CD4-positive, alpha-beta T cell (primary cell): ENCODE measurements at regions of chr3 and their contacts with region 1.

Region 1: DNA sequence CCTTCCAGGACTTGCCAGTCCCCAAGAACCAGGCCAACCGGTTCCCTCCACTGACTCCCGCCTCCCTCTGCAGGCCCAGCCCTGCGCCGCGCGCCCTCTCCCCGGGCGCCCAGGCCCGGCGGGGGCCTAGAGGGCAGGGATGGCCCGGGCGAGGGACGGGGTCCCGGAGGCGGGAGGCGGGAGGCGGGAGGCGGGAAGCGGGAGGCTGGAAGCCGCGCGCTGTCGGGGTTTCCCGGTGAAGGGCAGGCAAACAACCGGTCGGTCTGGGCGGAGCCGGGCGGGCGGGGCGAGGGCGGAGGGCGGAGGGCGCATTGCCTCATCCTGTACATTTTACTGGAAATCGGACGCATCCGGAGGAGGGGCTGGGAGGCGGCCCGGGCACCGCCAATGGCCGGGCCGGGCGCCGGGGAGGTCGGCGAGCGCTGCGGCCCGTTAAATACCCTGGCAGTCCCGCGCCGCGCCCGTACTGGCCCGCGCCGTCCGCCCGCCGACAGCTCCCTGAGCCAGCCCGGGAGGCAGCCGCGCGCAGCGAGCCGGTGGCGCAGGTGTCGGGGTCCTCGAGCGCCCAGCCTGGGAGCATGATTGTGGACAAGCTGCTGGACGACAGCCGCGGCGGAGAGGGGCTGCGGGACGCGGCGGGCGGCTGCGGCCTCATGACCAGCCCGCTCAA is at the start of gene NFKBIZ:
- DNase-seq: peak; percentile 84 to 97 (median 91)
- ATAC-seq: peak; percentile 66
- H3K4me3 ChIP-seq: peak within 1 kb of the TSS; percentile 79
- H3K4me3 Mint-ChIP-seq: peak within 1 kb of the TSS; percentile 99
- H3K27ac ChIP-seq: peak within 1 kb of the TSS; percentile 92 to 99
- H3K27ac Mint-ChIP-seq: peak within 1 kb of the TSS; percentile 100
- H3K4me1 ChIP-seq: peaks cover 24% of the 10 kb centered on the region
- H3K4me1 Mint-ChIP-seq: peaks cover 52% of the 10 kb centered on the region
- H3K27me3 ChIP-seq: no peaks in the 10 kb centered on the region
- H3K27me3 Mint-ChIP-seq: peaks cover 5% of the 10 kb centered on the region
- CTCF ChIP-seq: no peak
- total RNA-seq, gene NFKBIZ: 438 to 451 TPM

Region 2: DNA sequence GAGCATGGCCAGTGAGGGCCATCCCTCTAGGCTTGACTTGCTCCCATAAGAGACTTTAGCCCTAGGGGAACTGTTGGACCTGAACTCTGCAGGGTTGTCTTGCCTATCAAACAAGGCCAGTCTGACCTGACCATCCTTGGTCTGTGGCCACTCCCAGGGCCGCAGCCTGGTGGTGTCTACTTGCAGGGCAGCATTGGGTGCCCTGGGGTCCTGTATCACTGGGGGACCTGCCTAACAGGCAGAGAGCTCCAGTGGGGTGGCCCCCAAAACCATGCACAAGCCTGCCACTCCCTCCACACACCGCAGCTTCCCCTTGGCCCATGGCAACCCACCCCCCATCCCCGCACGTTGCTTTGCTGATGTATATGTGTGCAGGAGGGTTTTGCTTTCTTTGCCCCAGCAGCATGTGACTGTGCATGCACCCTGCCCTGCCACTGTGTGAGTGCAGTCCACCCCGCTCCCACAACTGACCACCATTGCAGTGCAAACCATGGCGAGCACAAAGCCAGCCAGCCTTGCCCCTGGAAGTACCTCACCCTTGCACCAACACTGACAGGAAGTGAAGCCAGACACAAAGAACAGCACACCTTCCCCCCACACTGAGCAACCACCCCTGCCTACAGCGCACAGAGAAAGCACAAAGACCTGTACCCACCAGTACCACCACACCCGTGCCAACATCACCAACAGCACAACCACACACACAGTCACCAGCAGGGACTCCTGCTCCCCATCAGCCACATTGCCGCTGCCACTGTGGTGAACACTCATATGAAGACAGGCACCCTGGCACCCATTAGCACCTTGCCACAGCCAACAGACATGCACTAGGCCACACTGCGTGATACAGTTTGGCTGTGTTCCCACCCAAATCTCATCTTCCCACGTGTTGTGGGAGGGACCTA is 424.9 kb before region 1 on chr3:
- CTCF ChIA-PET with region 1: no interaction called
- POLR2A ChIA-PET with region 1: no interaction called
- intact Hi-C with region 1: no loop called
- DNase-seq: peak in 2 of 14 experiments; percentile 1 to 31
- ATAC-seq: peak; percentile 63
- H3K4me3 ChIP-seq: no peak overlapping the region
- H3K4me3 Mint-ChIP-seq: peak overlapping the region; percentile 26
- H3K27ac ChIP-seq: no peak overlapping the region
- H3K27ac Mint-ChIP-seq: peak overlapping the region; percentile 64
- H3K4me1 ChIP-seq: peaks cover 28% of the 10 kb centered on the region
- H3K4me1 Mint-ChIP-seq: peaks cover 60% of the 10 kb centered on the region
- H3K27me3 ChIP-seq: no peaks in the 10 kb centered on the region
- H3K27me3 Mint-ChIP-seq: no peaks in the 10 kb centered on the region
- CTCF ChIP-seq: no peak

Region 3: GRCh38 chr3:101685870-101686412 is 163.2 kb before region 1 on chr3:
- CTCF ChIA-PET with region 1: no interaction called
- POLR2A ChIA-PET with region 1: interaction called, 29 read pairs
- intact Hi-C with region 1: loop called in 1 of 2 experiments (anchors 5 kb)
- DNase-seq: peak in 4 of 14 experiments; percentile 7 to 40 (median 26)
- ATAC-seq: peak; percentile 5
- H3K4me3 ChIP-seq: peak overlapping the region; percentile 91
- H3K4me3 Mint-ChIP-seq: peak overlapping the region; percentile 99
- H3K27ac ChIP-seq: peak overlapping the region; percentile 87 to 94
- H3K27ac Mint-ChIP-seq: peak overlapping the region; percentile 99
- H3K4me1 ChIP-seq: peaks cover 30% of the 10 kb centered on the region
- H3K4me1 Mint-ChIP-seq: peaks cover 49% of the 10 kb centered on the region
- H3K27me3 ChIP-seq: no peaks in the 10 kb centered on the region
- H3K27me3 Mint-ChIP-seq: no peaks in the 10 kb centered on the region
- CTCF ChIP-seq: no peak

Region 4: DNA sequence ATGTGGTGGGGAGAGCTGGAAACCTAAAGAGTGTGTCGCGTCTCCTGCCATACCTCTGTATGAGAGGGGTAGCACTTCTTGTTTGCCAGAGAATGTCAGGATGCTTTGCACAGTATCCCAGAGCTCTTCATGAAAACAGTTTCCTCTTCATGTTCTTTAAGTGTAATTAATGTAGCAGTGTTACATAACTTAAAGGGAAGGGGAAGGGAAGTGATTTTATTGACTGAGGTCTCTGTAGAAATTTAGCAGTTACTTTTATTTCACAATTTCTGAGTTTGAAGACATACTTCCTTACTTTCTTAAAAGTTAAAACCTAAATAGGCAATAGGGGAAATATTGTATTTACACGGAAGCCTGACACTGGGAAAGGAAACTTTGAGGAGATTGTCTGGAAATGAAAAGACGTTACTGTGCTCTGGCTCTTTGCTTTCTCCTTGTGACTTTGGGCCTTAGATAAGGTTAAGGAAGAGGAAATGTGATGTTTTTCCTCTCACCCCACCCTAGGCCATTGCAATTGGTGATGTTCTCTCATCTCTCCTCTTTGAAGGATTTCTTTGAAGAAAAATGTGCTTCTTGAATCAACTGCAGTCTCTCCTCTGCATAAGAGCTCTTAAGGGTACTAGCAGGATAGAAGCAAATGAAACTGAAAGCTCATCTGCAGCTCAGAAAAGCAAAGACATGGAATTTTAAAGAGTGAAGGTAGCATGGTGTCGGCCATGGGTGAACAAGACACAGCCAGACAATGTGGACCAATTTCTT is 64.2 kb before region 1 on chr3:
- CTCF ChIA-PET with region 1: no interaction called
- POLR2A ChIA-PET with region 1: interaction called, 30 read pairs
- intact Hi-C with region 1: no loop called
- DNase-seq: peak in 3 of 14 experiments; percentile 52 to 63 (median 54)
- ATAC-seq: peak; percentile 89
- H3K4me3 ChIP-seq: peak overlapping the region; percentile 30
- H3K4me3 Mint-ChIP-seq: peak overlapping the region; percentile 79
- H3K27ac ChIP-seq: peak overlapping the region; percentile 64 to 65
- H3K27ac Mint-ChIP-seq: peak overlapping the region; percentile 92
- H3K4me1 ChIP-seq: peaks cover 32% of the 10 kb centered on the region
- H3K4me1 Mint-ChIP-seq: peaks cover 72% of the 10 kb centered on the region
- H3K27me3 ChIP-seq: no peaks in the 10 kb centered on the region
- H3K27me3 Mint-ChIP-seq: no peaks in the 10 kb centered on the region
- CTCF ChIP-seq: no peak

Region 5: DNA sequence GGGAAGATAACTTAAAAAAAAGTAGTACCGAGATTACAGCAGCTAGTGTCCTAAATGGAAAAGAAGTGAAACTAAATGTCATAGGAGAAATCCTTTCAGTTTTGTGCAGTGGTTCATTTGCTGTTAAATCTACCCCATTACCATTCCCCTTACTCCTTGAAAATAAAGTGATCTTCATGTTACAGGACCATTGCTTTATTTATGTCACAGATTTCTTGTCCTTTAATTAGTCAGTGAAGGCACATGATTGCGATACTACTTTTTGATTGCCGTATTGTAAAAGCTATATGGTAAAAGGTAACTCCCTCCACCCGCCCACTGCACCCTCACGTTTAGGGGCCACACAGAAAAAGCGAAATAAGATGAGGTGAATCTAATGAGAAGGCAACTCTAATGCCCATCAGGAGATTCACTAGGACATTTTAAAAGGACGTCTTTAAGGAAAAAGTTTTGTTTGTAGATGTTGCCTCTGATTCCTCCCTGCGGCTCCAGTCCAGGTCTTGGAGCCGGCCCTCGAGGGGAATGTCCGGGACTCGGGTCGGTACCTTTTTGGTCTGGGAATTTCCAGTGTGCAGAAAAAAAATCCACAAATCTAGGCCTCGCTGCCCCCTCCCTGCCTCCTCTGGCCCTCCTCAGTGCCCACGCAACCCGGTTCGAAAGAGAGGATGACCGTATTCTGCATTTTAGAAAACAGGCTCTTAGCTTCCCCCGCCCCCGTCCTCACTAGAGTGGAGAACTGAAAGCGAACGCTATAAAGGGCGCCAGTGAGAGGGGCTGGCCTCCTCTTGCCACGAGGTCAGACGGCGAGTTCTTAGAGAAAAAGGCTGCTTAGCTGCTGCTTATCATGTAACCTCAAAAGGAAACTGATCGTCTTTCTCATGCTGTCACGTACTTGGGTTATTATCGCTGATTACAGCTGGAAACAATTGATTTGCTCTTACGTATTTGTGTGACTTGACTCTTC is 21.7 kb before region 1 on chr3:
- CTCF ChIA-PET with region 1: interaction called, 3 read pairs
- POLR2A ChIA-PET with region 1: interaction called, 221 read pairs
- intact Hi-C with region 1: loop called (anchors 1 to 2 kb)
- DNase-seq: peak; percentile 55 to 93 (median 66)
- ATAC-seq: peak; percentile 79
- H3K4me3 ChIP-seq: peak overlapping the region; percentile 70
- H3K4me3 Mint-ChIP-seq: peak overlapping the region; percentile 98
- H3K27ac ChIP-seq: peak overlapping the region; percentile 90 to 93
- H3K27ac Mint-ChIP-seq: peak overlapping the region; percentile 99
- H3K4me1 ChIP-seq: peaks cover 31% of the 10 kb centered on the region
- H3K4me1 Mint-ChIP-seq: peaks cover 66% of the 10 kb centered on the region
- H3K27me3 ChIP-seq: no peaks in the 10 kb centered on the region
- H3K27me3 Mint-ChIP-seq: no peaks in the 10 kb centered on the region
- CTCF ChIP-seq: no peak

Region 6: DNA sequence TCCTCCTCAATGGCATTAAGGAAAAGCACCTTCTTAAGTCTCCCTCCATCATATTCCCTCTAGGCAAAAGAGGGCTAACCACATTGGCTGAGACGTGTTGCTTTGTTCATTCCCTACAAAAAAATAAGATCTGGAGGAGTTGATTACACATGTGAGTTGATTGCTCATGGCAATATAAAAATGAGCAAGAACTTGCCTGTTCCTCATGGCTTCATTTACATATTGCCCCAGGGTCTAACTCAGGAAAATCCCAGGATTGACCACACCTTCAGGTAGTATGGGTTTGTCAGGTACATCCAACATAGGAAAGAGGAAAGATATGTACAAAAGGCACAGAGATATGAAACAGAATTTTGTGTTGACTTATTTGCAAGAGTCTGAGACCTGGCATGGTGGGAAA is 35.6 kb after region 1 on chr3:
- CTCF ChIA-PET with region 1: no interaction called
- POLR2A ChIA-PET with region 1: no interaction called
- intact Hi-C with region 1: no loop called
- DNase-seq: no peak
- ATAC-seq: no peak
- H3K4me3 ChIP-seq: no peak overlapping the region
- H3K4me3 Mint-ChIP-seq: no peak overlapping the region
- H3K27ac ChIP-seq: no peak overlapping the region
- H3K27ac Mint-ChIP-seq: no peak overlapping the region
- H3K4me1 ChIP-seq: no peaks in the 10 kb centered on the region
- H3K4me1 Mint-ChIP-seq: no peaks in the 10 kb centered on the region
- H3K27me3 ChIP-seq: no peaks in the 10 kb centered on the region
- H3K27me3 Mint-ChIP-seq: no peaks in the 10 kb centered on the region
- CTCF ChIP-seq: no peak

Region 7: DNA sequence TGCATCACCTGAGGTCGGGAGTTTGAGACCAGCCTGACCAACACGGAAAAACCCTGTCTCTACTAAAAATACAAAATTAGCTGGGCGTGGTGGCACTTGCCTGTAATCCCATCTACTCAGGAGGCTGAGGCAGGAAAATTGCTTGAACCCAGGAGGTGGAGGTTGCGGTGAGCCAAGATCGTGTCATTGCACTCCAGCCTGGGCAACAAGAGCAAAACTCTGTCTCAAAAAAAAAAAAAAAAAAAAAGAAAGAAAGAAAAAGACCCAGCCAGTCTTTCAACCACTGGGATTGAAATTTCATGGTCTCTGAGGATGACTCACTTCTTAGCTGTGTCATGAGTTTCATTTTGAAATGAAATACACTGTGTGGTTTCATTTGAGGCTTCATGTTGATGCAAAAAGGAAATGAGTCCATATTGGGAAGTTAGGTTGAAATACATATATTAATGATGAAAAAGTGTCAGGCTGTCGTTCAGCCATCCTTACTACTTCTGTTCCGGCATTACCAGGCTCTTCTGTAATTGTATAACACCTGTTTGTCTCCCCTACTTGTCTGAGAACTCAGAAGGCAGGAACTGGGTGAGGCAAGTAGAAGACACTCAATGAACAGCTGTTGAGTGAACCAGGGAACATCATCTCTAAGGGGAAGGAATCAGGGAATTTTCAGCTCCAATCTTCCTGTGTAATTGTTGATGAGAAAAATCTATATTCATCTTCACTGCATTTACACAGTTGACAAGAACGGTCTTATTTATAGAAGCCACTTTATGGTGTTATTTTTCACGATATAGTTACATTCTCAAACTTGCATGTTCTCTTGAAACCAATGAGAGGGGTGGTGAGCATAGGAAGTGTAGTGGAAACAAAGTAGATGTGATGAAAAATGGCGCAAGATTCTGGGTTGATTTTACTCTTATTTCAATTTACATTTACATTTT is 87.5 kb after region 1 on chr3:
- CTCF ChIA-PET with region 1: interaction called, 3 read pairs
- POLR2A ChIA-PET with region 1: interaction called, 25 read pairs
- intact Hi-C with region 1: loop called in 1 of 2 experiments (anchors 1 kb)
- DNase-seq: peak in 5 of 14 experiments; percentile 24 to 86 (median 77)
- ATAC-seq: peak; percentile 92
- H3K4me3 ChIP-seq: peak overlapping the region; percentile 16
- H3K4me3 Mint-ChIP-seq: peak overlapping the region; percentile 79
- H3K27ac ChIP-seq: peak overlapping the region in 1 of 2 donors; percentile 37
- H3K27ac Mint-ChIP-seq: peak overlapping the region; percentile 87
- H3K4me1 ChIP-seq: peaks cover 19% of the 10 kb centered on the region
- H3K4me1 Mint-ChIP-seq: peaks cover 25% of the 10 kb centered on the region
- H3K27me3 ChIP-seq: no peaks in the 10 kb centered on the region
- H3K27me3 Mint-ChIP-seq: no peaks in the 10 kb centered on the region
- CTCF ChIP-seq: no peak

Region 8: GRCh38 chr3:102180291-102181039 is 331.3 kb after region 1 on chr3:
- CTCF ChIA-PET with region 1: no interaction called
- POLR2A ChIA-PET with region 1: interaction called, 13 read pairs
- intact Hi-C with region 1: no loop called
- DNase-seq: peak in 4 of 14 experiments; percentile 4 to 36 (median 15)
- ATAC-seq: peak; percentile 78
- H3K4me3 ChIP-seq: peak overlapping the region; percentile 6
- H3K4me3 Mint-ChIP-seq: no peak overlapping the region
- H3K27ac ChIP-seq: peak overlapping the region in 1 of 2 donors; percentile 5
- H3K27ac Mint-ChIP-seq: no peak overlapping the region
- H3K4me1 ChIP-seq: peaks cover 3% of the 10 kb centered on the region
- H3K4me1 Mint-ChIP-seq: no peaks in the 10 kb centered on the region
- H3K27me3 ChIP-seq: no peaks in the 10 kb centered on the region
- H3K27me3 Mint-ChIP-seq: no peaks in the 10 kb centered on the region
- CTCF ChIP-seq: no peak